K562 (cell line): ENCODE measurements at regions of chr14 and their contacts with region 1.

Region 1: DNA sequence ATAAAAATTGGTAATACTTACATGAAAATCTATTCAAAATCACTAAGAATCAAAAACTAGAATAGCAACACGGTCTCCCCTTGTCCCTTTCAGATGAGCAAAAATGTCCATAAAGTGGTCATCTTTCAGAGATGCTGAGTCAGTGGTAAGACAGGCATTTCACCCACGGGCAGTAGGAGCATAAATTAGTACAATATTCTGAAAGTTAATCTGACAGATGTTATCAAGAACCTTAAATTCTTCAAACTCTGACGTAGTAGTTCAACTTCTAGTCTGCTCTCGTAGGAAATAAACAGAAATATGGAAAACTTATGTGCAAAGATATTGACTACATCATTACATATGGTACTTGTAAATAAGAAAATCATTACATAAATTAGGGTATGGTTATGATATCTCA is 33.1 kb upstream of the GNPNAT1 start:
- DNase-seq: no peak
- ATAC-seq: no peak
- H3K4me3 ChIP-seq: no peak overlapping the region
- H3K27ac ChIP-seq: no peak overlapping the region
- H3K4me1 ChIP-seq: no peaks in the 10 kb centered on the region
- H3K27me3 ChIP-seq: peaks cover 0 to 2% of the 10 kb centered on the region in 2 experiments; a peak in 1 of 5 replicates
- CTCF ChIP-seq: no peak
- EP300 ChIP-seq: no peak
- POLR2A ChIP-seq: no peak
- RAD21 ChIP-seq: no peak

Region 2: GRCh38 chr14:52299692-52300278 is 524.7 kb before region 1 on chr14:
- CTCF ChIA-PET with region 1: no interaction called
- POLR2A ChIA-PET with region 1: no interaction called
- in situ Hi-C with region 1: loop called (anchors 25 kb)
- intact Hi-C with region 1: loop called (anchors 5 kb)
- DNase-seq: peak; percentile 12 to 31 (median 20)
- ATAC-seq: peak; percentile 75
- H3K4me3 ChIP-seq: no peak overlapping the region
- H3K27ac ChIP-seq: no peak overlapping the region
- H3K4me1 ChIP-seq: no peaks in the 10 kb centered on the region
- H3K27me3 ChIP-seq: no peaks in the 10 kb centered on the region
- CTCF ChIP-seq: peak in 2 of 3 experiments; percentile 19 to 68; a peak in 4 of 6 replicates
- EP300 ChIP-seq: no peak
- POLR2A ChIP-seq: no peak
- RAD21 ChIP-seq: peak; percentile 55 to 68

Region 3: GRCh38 chr14:52602131-52602530 is 222.4 kb before region 1 on chr14:
- CTCF ChIA-PET with region 1: no interaction called
- POLR2A ChIA-PET with region 1: no interaction called
- in situ Hi-C with region 1: no loop called
- intact Hi-C with region 1: loop called (anchors 10 kb)
- DNase-seq: no peak
- ATAC-seq: no peak
- H3K4me3 ChIP-seq: no peak overlapping the region
- H3K27ac ChIP-seq: no peak overlapping the region
- H3K4me1 ChIP-seq: no peaks in the 10 kb centered on the region
- H3K27me3 ChIP-seq: no peaks in the 10 kb centered on the region
- CTCF ChIP-seq: no peak
- EP300 ChIP-seq: no peak
- POLR2A ChIP-seq: no peak
- RAD21 ChIP-seq: no peak

Region 4: DNA sequence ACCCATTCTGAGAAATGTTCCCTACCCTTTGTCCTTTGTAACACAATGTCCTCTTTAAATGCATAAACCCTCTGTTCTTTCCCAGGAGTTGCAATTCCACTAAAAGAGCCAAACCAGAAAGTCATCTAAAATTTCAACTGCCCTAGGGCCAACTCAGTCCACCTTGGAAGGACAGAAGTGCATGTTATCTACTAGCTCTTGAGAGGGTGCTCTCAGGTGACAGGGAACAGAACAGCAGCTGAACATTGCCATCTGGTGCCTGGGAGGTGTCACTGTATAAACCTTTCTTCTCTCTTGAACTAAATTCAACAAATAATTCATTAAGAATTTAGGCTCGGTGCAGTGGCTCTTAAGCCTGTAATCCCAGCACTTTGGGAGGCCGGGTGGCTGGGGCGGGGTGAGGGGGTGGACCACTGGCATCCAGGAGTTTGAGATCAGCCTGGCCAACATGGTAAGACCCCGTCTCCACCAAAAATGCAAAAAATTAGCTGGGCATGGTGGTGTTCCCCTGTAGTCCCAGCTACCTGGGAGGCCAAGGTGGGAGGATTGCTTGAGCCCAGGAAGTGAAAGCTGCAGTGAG is 136.6 kb after region 1 on chr14:
- CTCF ChIA-PET with region 1: interaction called, 6 read pairs
- POLR2A ChIA-PET with region 1: interaction called, 3 read pairs
- in situ Hi-C with region 1: no loop called
- intact Hi-C with region 1: loop called (anchors 5 kb)
- DNase-seq: peak; percentile 10 to 47 (median 24)
- ATAC-seq: peak; percentile 85
- H3K4me3 ChIP-seq: no peak overlapping the region
- H3K27ac ChIP-seq: no peak overlapping the region
- H3K4me1 ChIP-seq: no peaks in the 10 kb centered on the region
- H3K27me3 ChIP-seq: no peaks in the 10 kb centered on the region
- CTCF ChIP-seq: peak; percentile 50 to 65 (median 57); a peak in 5 of 6 replicates
- EP300 ChIP-seq: no peak
- POLR2A ChIP-seq: no peak
- RAD21 ChIP-seq: peak; percentile 78 to 88

Region 5: GRCh38 chr14:53055003-53055402 is 230.5 kb after region 1 on chr14:
- CTCF ChIA-PET with region 1: interaction called, 12 read pairs
- POLR2A ChIA-PET with region 1: no interaction called
- in situ Hi-C with region 1: no loop called
- intact Hi-C with region 1: loop called (anchors 2 kb)
- DNase-seq: peak; percentile 21 to 41 (median 33)
- ATAC-seq: peak; percentile 76
- H3K4me3 ChIP-seq: no peak overlapping the region
- H3K27ac ChIP-seq: no peak overlapping the region
- H3K4me1 ChIP-seq: no peaks in the 10 kb centered on the region
- H3K27me3 ChIP-seq: no peaks in the 10 kb centered on the region
- CTCF ChIP-seq: peak; percentile 34 to 53 (median 52); a peak in 4 of 6 replicates
- EP300 ChIP-seq: no peak
- POLR2A ChIP-seq: no peak
- RAD21 ChIP-seq: peak; percentile 40 to 75

Region 6: GRCh38 chr14:53306267-53306721 is 481.8 kb after region 1 on chr14:
- CTCF ChIA-PET with region 1: interaction called, 8 read pairs
- POLR2A ChIA-PET with region 1: no interaction called
- in situ Hi-C with region 1: loop called (anchors 10 kb)
- intact Hi-C with region 1: loop called (anchors 5 kb)
- DNase-seq: peak; percentile 28 to 35 (median 31)
- ATAC-seq: peak; percentile 74
- H3K4me3 ChIP-seq: no peak overlapping the region
- H3K27ac ChIP-seq: no peak overlapping the region
- H3K4me1 ChIP-seq: no peaks in the 10 kb centered on the region
- H3K27me3 ChIP-seq: no peaks in the 10 kb centered on the region
- CTCF ChIP-seq: peak; percentile 47 to 72 (median 70)
- EP300 ChIP-seq: no peak
- POLR2A ChIP-seq: no peak
- RAD21 ChIP-seq: peak; percentile 66 to 73